ENCODE measurements at regions of chr11 and their contacts with region 1.

Region 1: GRCh38 chr11:121451986-121452608 is at the start of gene SORL1:
- DNase-seq: peak; percentile 82
- ATAC-seq: peak; percentile 66
- H3K4me3 Mint-ChIP-seq: peak within 1 kb of the TSS; percentile 90
- H3K27ac Mint-ChIP-seq: peak within 1 kb of the TSS; percentile 94
- H3K4me1 Mint-ChIP-seq: peaks cover 70% of the 10 kb centered on the region
- H3K27me3 Mint-ChIP-seq: no peaks in the 10 kb centered on the region
- total RNA-seq, gene SORL1: 179 to 195 TPM

Region 2: DNA sequence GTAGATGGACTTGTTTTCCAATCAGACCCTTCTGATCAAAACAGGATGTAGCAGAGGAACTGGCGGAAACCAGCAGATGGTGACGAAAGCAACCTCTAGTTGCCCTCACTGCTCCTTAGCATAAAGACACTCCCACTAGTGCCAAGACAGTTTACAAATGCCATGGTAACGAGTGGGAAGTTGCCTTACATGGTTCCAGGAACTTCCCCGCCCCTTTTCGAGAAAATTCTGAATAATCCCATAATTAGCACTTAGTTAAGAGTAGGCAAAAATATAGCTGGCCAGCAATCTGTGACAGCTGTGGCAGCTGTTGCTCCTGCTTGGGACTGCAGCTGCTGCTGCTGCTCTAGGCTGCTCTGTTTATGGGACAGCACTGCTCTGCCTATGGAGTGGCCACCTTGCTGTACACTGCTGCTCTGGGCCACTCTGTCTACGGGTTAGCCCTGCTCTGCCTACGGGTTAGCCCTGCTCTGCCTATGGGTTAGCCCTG is 33.4 kb before region 1 on chr11:
- POLR2A ChIA-PET with region 1: interaction called, 16 read pairs
- DNase-seq: peak; percentile 40
- ATAC-seq: peak; percentile 63
- H3K4me3 Mint-ChIP-seq: peak overlapping the region; percentile 23
- H3K27ac Mint-ChIP-seq: peak overlapping the region; percentile 62
- H3K4me1 Mint-ChIP-seq: peaks cover 51% of the 10 kb centered on the region
- H3K27me3 Mint-ChIP-seq: no peaks in the 10 kb centered on the region

Region 3: DNA sequence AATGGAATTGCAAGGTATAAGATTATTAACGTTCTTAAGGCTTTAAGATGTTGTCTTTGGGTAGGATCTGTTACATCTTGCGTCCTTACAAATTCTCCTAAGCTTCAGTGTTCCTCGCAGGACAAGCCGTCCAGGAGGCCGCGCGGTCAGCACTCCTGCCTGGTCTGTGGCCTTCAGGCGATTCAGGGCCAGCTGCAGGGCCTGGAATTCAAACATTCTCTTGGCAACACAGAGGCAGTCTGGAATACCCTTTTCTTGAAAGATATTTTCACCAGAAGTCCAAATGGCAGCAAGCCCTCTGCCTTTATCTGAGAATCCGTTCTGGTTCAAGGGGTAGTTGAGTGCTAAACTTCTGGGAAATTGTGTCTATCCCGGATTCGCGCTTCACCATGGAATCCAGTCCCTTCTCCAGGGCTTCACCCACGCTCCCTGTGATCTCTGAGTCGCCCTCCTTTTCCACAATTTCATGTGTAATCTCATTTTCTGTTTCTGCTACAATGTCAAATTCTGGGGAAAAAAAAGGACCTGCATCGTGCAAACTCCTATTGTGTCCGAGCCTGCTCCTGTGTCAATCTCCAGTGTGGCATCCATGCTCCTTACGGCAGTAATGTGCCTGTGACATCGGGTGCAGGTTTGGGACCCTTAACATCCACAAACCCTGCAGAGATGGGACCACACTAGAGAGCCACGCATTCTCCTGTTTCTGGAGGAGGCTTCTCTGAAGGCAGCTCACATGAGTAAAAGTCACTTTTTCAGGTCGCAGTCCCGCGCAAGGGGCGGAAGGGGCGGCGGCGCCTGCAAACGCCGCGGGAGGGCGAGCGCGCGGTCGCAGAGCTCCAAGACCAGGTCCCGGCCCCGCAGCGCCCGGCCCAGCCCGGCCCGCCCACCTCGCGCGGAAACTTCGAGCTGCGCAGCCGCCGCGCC is 25.4 kb before region 1 on chr11:
- POLR2A ChIA-PET with region 1: interaction called, 11 read pairs
- DNase-seq: peak; percentile 69
- ATAC-seq: peak; percentile 80
- H3K4me3 Mint-ChIP-seq: peak overlapping the region; percentile 58
- H3K27ac Mint-ChIP-seq: peak overlapping the region; percentile 8
- H3K4me1 Mint-ChIP-seq: peaks cover 14% of the 10 kb centered on the region
- H3K27me3 Mint-ChIP-seq: no peaks in the 10 kb centered on the region

Region 4: DNA sequence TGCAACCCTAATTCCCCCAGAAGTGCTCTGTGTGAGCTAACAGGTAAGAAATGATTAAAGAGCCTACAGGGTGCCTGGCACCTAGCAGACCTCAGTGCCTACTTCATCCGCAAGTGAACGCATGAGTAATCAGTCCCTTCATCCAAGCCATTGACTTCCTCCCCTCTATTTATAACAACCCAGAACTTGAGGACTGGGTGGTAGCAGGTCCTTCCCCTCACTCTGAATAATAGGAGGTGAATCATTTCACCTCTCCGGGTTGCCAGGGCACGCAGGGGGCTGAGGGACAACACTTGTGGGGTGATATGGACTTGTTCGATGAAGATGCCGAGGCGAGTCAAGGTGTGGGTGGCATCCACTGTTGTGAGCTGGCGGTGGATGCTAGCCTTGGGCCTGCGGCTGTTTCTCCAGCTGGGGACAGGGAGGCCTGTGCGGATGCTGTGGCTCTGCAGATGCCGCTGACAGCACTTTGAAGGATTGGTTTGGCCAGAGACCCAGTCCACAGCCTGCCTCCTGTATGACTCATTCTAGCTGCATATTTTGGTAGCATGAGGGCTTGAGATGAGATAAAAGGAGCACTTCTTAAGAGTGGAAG is 12.4 kb after region 1 on chr11:
- POLR2A ChIA-PET with region 1: interaction called, 152 read pairs
- DNase-seq: peak; percentile 79
- ATAC-seq: peak; percentile 76
- H3K4me3 Mint-ChIP-seq: peak overlapping the region; percentile 87
- H3K27ac Mint-ChIP-seq: peak overlapping the region; percentile 88
- H3K4me1 Mint-ChIP-seq: peaks cover 88% of the 10 kb centered on the region
- H3K27me3 Mint-ChIP-seq: no peaks in the 10 kb centered on the region

Region 5: GRCh38 chr11:121482231-121483129 is 30.4 kb after region 1 on chr11:
- POLR2A ChIA-PET with region 1: interaction called, 29 read pairs
- DNase-seq: peak; percentile 66
- ATAC-seq: peak; percentile 86
- H3K4me3 Mint-ChIP-seq: peak overlapping the region; percentile 87
- H3K27ac Mint-ChIP-seq: peak overlapping the region; percentile 97
- H3K4me1 Mint-ChIP-seq: peaks cover 50% of the 10 kb centered on the region
- H3K27me3 Mint-ChIP-seq: no peaks in the 10 kb centered on the region

Region 6: GRCh38 chr11:121582296-121582695 is 130.2 kb after region 1 on chr11:
- POLR2A ChIA-PET with region 1: no interaction called
- DNase-seq: no peak
- ATAC-seq: peak; percentile 77
- H3K4me3 Mint-ChIP-seq: peak overlapping the region; percentile 31
- H3K27ac Mint-ChIP-seq: peak overlapping the region; percentile 80
- H3K4me1 Mint-ChIP-seq: peaks cover 11% of the 10 kb centered on the region
- H3K27me3 Mint-ChIP-seq: no peaks in the 10 kb centered on the region